OCI-LY7 (cell line): ENCODE measurements at regions of chr11 and their contacts with region 1.

Region 1: GRCh38 chr11:82906244-82906654 is 4.7 kb downstream of the DDIAS start:
- DNase-seq: peak; percentile 79
- H3K4me3 ChIP-seq: peak overlapping the region; percentile 24
- H3K27ac ChIP-seq: peak overlapping the region; percentile 13
- H3K4me1 ChIP-seq: peaks cover 78% of the 10 kb centered on the region
- CTCF ChIP-seq: peak; percentile 94

Region 2: GRCh38 chr11:82969811-82970210 is 63.6 kb after region 1 on chr11:
- CTCF ChIA-PET with region 1: interaction called, 3 read pairs
- POLR2A ChIA-PET with region 1: interaction called, 4 read pairs
- intact Hi-C with region 1: loop called (anchors 5 kb)
- DNase-seq: peak; percentile 94
- H3K4me3 ChIP-seq: peak overlapping the region; percentile 33
- H3K27ac ChIP-seq: peak overlapping the region; percentile 98
- H3K4me1 ChIP-seq: peaks cover 88% of the 10 kb centered on the region
- CTCF ChIP-seq: no peak

Region 3: DNA sequence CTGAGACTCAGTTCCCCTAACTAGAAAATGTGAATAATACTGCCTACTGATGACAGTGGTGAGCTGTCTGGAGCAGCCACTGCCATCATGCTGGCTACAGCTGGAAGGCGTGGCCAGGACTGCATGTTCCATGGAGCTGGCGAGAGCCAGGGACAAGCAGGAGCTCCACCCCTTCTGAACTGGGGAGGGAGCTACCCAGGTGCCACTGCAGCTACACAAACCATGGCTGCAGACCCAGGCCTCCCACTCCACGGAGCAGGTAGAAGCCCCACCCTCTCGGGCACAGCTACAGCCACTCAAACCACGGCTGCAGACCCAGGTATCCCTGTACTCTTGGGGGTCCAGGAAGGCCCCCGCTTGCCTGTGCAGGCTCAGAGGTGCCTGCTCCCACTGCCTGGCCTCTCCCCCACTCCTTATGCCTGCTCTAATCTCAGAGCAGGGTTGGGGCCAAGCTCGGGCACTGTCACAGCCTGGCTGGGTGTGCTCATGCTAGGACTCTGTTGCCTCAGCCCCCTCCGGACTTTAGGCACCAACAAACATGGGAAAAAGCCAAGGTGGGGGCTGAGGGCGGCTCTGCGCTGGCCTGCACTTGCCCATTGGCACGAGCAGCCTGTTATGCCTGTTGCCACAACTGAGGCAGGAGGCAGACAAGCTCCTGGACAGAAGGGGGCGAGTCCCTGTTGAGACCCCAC is 113.8 kb after region 1 on chr11:
- CTCF ChIA-PET with region 1: no interaction called
- POLR2A ChIA-PET with region 1: interaction called, 10 read pairs
- intact Hi-C with region 1: no loop called
- DNase-seq: no peak
- H3K4me3 ChIP-seq: no peak overlapping the region
- H3K27ac ChIP-seq: no peak overlapping the region
- H3K4me1 ChIP-seq: peaks cover 27% of the 10 kb centered on the region
- CTCF ChIP-seq: no peak

Region 4: DNA sequence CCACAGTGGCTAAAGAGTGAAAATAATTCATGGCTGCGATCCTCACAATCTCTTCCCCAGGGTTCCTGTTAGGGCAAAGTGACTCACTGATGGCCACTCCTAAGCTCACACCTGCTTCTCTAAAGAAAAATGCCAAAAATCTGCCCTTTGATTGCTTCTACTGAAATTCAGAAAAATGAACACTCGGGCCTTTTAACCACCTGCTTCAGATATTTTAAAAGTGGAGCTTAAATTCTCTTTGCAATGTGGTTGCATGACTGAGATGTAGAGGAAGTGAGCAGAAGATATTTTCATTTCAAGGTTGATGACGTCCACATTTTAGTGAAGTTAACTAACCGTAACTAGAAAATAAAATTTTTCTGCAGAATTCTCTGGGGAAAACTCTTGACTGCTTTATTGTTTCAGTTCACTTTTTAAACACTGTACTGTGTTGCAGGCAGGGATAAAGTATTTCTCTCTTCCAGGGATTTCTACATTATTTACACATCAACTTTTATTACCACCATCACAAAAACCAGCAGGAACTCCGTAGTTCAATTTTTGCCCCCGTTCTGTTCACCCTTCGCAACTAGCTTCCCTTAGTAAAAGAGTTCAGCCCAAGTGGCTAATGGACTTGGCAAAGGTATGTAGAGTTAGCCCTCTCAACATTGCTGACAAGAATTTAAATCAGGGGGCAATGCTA is 157.0 kb after region 1 on chr11:
- CTCF ChIA-PET with region 1: no interaction called
- POLR2A ChIA-PET with region 1: interaction called, 5 read pairs
- intact Hi-C with region 1: loop called (anchors 2 kb)
- DNase-seq: peak; percentile 96
- H3K4me3 ChIP-seq: peak overlapping the region; percentile 62
- H3K27ac ChIP-seq: peak overlapping the region; percentile 100
- H3K4me1 ChIP-seq: peaks cover 95% of the 10 kb centered on the region
- CTCF ChIP-seq: no peak

Region 5: GRCh38 chr11:83249972-83250593 is 343.8 kb after region 1 on chr11:
- CTCF ChIA-PET with region 1: interaction called, 3 read pairs
- POLR2A ChIA-PET with region 1: interaction called, 6 read pairs
- intact Hi-C with region 1: loop called (anchors 1 kb)
- DNase-seq: peak; percentile 73
- H3K4me3 ChIP-seq: no peak overlapping the region
- H3K27ac ChIP-seq: no peak overlapping the region
- H3K4me1 ChIP-seq: peaks cover 10% of the 10 kb centered on the region
- CTCF ChIP-seq: peak; percentile 96